ENCODE measurements at regions of chr7 and their contacts with region 1.

Region 1: GRCh38 chr7:55132890-55133551 is 114.2 kb downstream of the EGFR start:
- DNase-seq: no peak
- H3K4me3 ChIP-seq: no peak overlapping the region
- H3K27ac ChIP-seq: peak overlapping the region; percentile 87 to 94 (median 90)
- H3K4me1 ChIP-seq: peaks cover 63 to 68% (median 66%) of the 10 kb centered on the region in 4 donors
- H3K27me3 ChIP-seq: no peaks in the 10 kb centered on the region
- CTCF ChIP-seq: no peak
- EP300 ChIP-seq: peak; percentile 83
- POLR2A ChIP-seq: no peak

Region 2: GRCh38 chr7:55026866-55027490 is 106.0 kb before region 1 on chr7:
- intact Hi-C with region 1: no loop called
- DNase-seq: peak; percentile 88
- H3K4me3 ChIP-seq: no peak overlapping the region
- H3K27ac ChIP-seq: peak overlapping the region; percentile 60 to 99 (median 78)
- H3K4me1 ChIP-seq: peaks cover 21 to 99% (median 96%) of the 10 kb centered on the region in 4 donors
- H3K27me3 ChIP-seq: no peaks in the 10 kb centered on the region
- CTCF ChIP-seq: no peak
- EP300 ChIP-seq: no peak
- POLR2A ChIP-seq: no peak

Region 3: DNA sequence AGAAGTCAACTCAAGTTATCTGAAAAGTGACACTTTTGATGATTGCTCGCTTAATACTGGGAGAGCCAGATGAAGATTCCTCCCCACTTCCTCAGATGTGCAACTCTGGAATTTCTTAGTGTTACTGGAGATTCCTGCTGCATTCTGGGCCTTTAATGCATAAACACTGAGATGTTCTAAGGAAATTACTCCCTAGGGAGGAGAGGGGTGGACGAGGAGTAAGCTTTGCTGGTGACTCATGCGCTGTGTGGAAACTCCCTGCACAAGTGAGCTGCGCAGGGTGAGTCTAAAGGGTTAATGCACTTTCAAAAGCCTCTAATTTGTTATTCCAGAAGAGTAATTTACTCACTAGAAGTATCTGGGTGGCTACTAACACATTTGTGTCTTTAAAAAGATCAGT is 67.9 kb before region 1 on chr7:
- intact Hi-C with region 1: loop called (anchors 2 kb)
- DNase-seq: no peak
- H3K4me3 ChIP-seq: peak overlapping the region in 2 of 4 donors; percentile 5 to 18
- H3K27ac ChIP-seq: peak overlapping the region; percentile 81 to 88 (median 87)
- H3K4me1 ChIP-seq: peaks cover 20 to 95% (median 79%) of the 10 kb centered on the region in 4 donors
- H3K27me3 ChIP-seq: no peaks in the 10 kb centered on the region
- CTCF ChIP-seq: no peak
- EP300 ChIP-seq: peak; percentile 21
- POLR2A ChIP-seq: no peak

Region 4: DNA sequence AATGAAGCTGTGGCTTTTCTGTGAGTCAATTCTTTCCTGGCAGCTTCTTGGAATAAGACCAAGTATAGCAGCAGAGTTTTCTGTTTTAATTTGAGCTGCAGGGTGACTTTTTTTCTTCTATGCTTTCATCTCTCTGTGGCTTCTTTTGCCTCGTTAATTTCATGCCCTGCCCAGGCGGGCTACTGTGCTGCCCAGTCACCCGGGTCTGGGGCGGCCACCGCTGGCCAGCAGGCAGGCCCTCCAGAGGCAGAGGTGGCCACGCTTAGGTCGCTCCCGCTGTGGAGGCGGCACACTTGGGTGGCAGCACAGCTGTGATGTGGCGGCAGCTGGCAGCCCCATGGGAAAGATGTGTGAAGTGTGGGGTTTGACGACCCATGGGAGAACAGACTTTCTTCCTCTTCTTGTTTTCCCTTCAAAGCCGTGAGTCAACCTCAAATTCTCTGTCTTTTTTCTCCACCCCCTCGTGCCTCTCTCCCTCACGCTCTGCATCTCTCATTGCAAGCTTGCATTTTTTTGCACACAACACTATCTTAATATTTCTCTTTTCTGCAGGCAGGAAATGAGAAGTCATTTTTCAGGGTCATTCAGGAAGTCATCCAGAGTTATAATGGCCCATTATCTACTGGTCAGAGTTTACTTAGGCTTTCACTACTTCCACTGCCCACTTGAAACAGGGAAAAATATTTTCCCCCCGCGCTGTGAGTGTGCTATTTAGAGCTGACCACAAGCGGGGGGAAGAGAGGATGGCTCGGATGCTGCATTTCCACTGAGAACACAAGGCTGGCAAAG is 46.4 kb before region 1 on chr7:
- intact Hi-C with region 1: loop called (anchors 5 kb)
- DNase-seq: no peak
- H3K4me3 ChIP-seq: peak overlapping the region; percentile 29 to 49 (median 38)
- H3K27ac ChIP-seq: peak overlapping the region; percentile 76 to 86 (median 81)
- H3K4me1 ChIP-seq: peaks cover 35 to 79% (median 74%) of the 10 kb centered on the region in 4 donors
- H3K27me3 ChIP-seq: no peaks in the 10 kb centered on the region
- CTCF ChIP-seq: no peak
- EP300 ChIP-seq: no peak
- POLR2A ChIP-seq: no peak

Region 5: DNA sequence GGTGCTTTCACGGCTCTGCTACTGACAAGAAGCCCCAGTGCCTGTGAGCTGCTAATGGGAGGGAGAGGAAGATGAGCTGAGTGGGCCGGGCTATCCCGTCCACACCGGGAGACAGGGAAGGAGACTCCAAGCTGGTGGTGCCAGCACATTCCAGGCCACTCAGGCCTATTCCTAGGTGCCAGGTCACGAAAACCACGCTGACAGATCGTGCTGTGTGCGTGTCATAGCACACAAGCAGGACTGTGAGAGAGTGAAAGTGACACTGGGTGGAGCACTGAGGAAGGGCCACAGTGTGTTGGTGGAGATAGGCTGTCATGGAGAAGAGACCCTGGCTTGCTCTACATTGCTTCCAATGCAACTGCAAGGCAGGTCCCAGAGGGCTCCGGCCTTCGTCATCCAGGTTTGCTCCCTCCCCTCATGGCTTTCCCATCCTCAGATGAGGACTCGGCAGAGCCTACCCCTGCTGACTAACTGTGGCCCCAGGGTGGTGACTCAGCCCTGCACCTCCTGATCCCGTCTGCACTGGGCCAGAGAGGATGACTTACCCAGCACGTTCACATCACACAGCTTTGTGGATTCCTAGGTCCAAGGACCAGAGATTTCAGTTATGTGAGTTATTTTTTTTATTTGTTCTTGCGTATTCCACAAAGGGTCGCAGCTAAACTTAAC is 53.1 kb after region 1 on chr7:
- intact Hi-C with region 1: no loop called
- DNase-seq: no peak
- H3K4me3 ChIP-seq: no peak overlapping the region
- H3K27ac ChIP-seq: peak overlapping the region in 1 of 4 donors; percentile 20
- H3K4me1 ChIP-seq: peaks cover 23 to 51% (median 40%) of the 10 kb centered on the region in 4 donors
- H3K27me3 ChIP-seq: no peaks in the 10 kb centered on the region
- CTCF ChIP-seq: no peak
- EP300 ChIP-seq: no peak
- POLR2A ChIP-seq: no peak

Region 6: GRCh38 chr7:55415173-55415778 is 282.3 kb after region 1 on chr7:
- intact Hi-C with region 1: no loop called
- DNase-seq: no peak
- H3K4me3 ChIP-seq: no peak overlapping the region
- H3K27ac ChIP-seq: no peak overlapping the region
- H3K4me1 ChIP-seq: no peaks in the 10 kb centered on the region
- H3K27me3 ChIP-seq: no peaks in the 10 kb centered on the region
- CTCF ChIP-seq: peak; percentile 73 to 83 (median 80)
- EP300 ChIP-seq: no peak
- POLR2A ChIP-seq: no peak

Measured in esophagus muscularis mucosa (tissue), 4 donors.